ENCODE measurements at regions of chr15 and their contacts with region 1.

Region 1: DNA sequence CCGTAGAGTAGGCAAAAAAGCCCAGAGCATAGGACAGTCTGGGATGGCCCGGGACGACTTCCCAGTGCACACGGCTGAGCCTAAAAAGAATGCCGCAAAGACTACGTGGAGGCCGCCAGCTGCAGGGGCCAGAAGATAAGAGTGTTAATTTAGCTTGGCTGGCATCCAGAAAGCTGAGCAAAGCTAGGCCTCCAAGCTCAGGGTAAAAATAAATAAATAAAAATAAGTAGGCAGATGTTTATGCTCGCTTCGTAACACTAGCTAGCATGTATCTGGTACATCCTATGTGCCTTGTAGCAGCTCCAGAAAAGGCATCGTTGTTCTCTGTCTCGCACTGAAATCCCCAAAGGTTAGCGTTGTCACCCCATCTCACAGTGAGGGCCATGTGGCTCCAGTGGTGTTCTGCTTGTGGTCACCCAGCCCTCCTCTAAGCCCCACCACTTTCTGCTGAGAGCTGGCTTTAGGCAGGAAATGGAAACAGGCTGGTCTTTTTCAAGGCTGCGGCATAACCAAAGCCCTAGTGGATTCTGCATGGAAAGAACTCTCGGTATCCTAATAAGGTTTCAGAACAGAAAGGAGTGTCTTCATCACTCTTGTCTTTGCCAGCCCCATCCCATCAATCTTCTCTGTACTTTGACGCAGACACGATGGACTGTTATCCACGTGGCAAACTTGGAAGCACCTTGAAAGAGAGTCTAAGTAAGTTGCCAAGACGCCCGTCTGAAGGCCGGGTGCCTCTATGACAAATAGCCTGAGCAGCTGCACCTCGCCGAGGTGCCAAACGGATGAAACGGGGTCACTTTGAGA is 58.1 kb upstream of the MEF2A start:
- DNase-seq: peak; percentile 71 to 82
- ATAC-seq: peak; percentile 78 to 92 (median 86)
- H3K4me3 ChIP-seq: peak overlapping the region in 2 of 10 donors; percentile 5 to 21
- H3K27ac ChIP-seq: peak overlapping the region; percentile 9 to 91 (median 80)
- H3K4me1 ChIP-seq: peaks cover 3 to 93% (median 74%) of the 10 kb centered on the region in 9 donors
- H3K27me3 ChIP-seq: no peaks in the 10 kb centered on the region
- CTCF ChIP-seq: no peak

Region 2: DNA sequence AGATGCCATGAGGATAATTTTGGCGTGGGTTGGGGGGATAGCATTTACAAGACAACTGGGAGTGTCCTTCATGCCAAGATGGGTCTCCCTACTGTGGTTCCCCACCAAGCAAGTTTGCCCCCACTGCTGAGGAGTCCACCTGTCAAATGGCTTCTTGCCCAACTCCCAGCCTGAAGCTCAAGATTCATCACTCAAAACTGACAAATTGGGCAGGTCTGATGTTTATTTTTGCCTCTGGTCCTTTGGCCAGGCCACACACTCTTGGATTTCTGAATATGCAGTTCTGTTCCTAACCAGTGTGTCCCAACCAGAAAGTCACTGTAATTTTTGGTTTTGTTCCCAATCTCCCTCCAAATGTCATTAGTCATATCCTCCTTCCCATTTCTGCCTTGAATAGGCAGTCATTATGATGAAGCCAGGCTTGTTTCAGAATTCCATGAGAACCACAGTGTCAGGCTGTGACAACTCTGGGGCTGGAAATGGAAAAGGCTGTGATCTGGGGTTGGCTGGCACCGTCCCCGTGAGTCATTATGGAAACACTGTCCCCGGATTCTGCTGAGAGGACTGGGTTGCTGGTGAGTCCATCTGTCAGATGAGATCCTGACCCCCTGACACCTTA is 28.8 kb after region 1 on chr15:
- intact Hi-C with region 1: loop called in 1 of 10 experiments (anchors 1 kb)
- DNase-seq: peak; percentile 47 to 62
- ATAC-seq: peak; percentile 65 to 95 (median 94)
- H3K4me3 ChIP-seq: no peak overlapping the region
- H3K27ac ChIP-seq: peak overlapping the region in 9 of 10 donors; percentile 48 to 76 (median 70)
- H3K4me1 ChIP-seq: peaks cover 6 to 23% (median 18%) of the 10 kb centered on the region in 9 donors
- H3K27me3 ChIP-seq: no peaks in the 10 kb centered on the region
- CTCF ChIP-seq: no peak

Measured in heart right ventricle (tissue), 16 donors.